ENCODE measurements at regions of chr2 and their contacts with region 1.

Region 1: GRCh38 chr2:112941753-112942658 is 31.0 kb downstream of the IL37 start:
- DNase-seq: peak; percentile 88
- H3K4me3 Mint-ChIP-seq: no peak overlapping the region
- H3K27ac Mint-ChIP-seq: no peak overlapping the region
- H3K4me1 Mint-ChIP-seq: no peaks in the 10 kb centered on the region
- H3K27me3 Mint-ChIP-seq: no peaks in the 10 kb centered on the region

Region 2: GRCh38 chr2:112606488-112606902 is 335.5 kb before region 1 on chr2:
- CTCF ChIA-PET with region 1: interaction called, 3 read pairs
- intact Hi-C with region 1: loop called (anchors 10 kb)
- DNase-seq: no peak
- H3K4me3 Mint-ChIP-seq: no peak overlapping the region
- H3K27ac Mint-ChIP-seq: no peak overlapping the region
- H3K4me1 Mint-ChIP-seq: no peaks in the 10 kb centered on the region
- H3K27me3 Mint-ChIP-seq: no peaks in the 10 kb centered on the region

Region 3: DNA sequence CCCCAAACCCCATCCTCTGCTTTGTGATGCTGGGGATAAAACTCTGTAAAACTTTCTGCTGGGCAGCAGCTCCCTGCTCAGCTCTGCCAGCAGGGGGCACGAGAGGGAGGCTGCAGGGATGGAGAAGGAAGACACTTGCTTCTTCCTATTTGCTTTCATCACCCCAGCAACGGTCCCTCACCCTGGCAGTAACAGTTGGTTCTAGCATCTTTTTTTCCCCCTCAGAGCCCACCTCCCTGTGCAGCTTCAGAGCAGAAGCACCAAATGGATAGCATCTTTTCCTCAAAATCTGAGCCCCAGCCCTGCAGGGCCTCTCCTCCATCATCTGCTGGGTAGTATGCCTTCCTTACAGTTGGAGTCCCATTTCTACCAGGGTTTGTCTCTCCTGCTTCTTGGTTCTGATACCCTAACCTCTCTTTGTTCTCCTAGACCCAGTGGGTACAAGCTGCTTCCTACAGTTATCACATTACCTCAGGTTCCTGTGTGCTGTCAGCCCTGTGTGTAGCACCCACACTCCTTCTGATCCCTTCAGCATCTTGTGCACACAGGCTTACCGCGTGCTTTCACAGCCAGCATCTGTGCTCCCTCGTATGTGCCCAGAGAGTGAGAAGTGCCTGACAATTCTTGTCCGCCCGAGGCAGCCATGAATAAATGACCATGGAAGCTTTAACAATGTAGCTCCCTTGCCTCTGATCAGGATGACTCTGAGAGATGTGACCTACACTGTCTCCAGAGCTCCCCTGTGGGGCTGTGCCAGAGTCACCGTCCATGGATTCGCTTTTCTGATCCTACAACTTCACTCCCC is 192.0 kb before region 1 on chr2:
- CTCF ChIA-PET with region 1: interaction called, 72 read pairs
- intact Hi-C with region 1: loop called (anchors 1 kb)
- DNase-seq: peak; percentile 90
- H3K4me3 Mint-ChIP-seq: no peak overlapping the region
- H3K27ac Mint-ChIP-seq: no peak overlapping the region
- H3K4me1 Mint-ChIP-seq: peaks cover 10% of the 10 kb centered on the region
- H3K27me3 Mint-ChIP-seq: no peaks in the 10 kb centered on the region

Region 4: DNA sequence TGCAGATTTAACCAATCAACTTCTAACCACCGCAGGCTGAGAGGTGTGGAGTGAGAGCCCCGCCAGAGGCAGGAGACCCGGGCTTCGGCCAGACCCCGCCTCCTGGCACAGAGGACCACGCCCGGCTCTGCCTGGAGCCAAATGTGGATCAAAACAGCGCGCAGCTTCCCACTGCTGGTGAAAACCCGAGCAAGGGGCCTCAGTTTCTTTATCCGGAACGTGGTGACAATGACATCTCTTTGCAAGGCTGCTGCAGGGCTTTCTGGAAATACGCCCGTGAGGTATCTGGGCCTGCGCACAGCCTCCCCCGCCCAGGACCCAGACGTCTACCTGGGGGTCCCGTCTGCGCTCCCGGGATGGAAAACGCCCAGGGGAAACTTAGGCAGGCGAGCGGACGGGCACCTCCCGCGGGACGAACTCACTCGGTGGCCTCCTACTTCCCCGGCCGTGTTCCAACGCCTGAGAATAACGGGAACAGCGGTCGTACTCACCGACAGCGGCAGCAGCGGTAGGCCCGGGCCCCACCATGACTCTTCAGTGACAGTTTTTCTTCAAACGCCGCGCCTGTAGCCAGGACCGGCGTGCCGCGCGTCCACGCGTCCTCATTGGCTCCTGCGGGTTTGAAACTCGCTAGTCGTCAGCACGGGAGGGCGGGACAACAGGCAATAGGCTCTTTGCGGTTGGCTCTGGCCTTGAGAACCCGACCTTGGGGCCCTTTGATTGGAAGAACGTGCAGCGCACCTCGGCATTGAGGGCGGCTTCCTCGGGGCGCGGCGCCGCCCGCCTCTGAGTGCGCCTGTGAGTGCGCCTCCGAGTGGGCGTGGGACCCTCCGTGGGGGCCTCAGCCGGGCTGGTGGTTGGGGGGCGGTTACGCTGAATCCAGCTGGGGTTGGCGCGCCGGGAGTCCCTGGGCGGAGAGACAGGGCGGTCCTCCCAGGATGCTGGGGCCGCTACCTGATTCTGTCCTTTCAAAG is 177.6 kb before region 1 on chr2 and contains the start of gene CKAP2L:
- CTCF ChIA-PET with region 1: interaction called, 12 read pairs
- intact Hi-C with region 1: no loop called
- DNase-seq: peak; percentile 99
- H3K4me3 Mint-ChIP-seq: peak within 1 kb of the TSS; percentile 98
- H3K27ac Mint-ChIP-seq: peak within 1 kb of the TSS; percentile 93
- H3K4me1 Mint-ChIP-seq: peaks cover 18% of the 10 kb centered on the region
- H3K27me3 Mint-ChIP-seq: no peaks in the 10 kb centered on the region
- total RNA-seq, gene CKAP2L: 49.2 to 50.8 TPM

Region 5: DNA sequence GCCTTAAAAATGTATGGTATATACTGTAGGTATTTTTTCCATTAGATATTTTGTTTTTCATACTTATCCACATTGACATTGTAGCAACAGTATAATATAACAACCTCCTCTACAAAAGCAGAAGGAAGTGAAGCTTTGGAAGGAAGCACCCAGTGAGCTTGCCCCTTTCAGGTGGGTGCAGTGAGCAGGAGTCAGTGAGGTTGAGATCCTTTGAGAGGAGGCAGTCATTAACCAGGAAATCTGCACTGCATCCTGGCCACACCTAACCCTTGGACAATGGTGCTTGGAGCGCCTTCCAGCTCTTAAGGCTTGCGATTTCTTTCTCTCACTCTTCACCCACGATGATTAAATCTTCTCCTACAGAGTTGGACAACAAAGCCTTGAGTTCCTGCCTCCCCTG is 17.2 kb before region 1 on chr2:
- CTCF ChIA-PET with region 1: interaction called, 21 read pairs
- intact Hi-C with region 1: no loop called
- DNase-seq: no peak
- H3K4me3 Mint-ChIP-seq: no peak overlapping the region
- H3K27ac Mint-ChIP-seq: no peak overlapping the region
- H3K4me1 Mint-ChIP-seq: no peaks in the 10 kb centered on the region
- H3K27me3 Mint-ChIP-seq: no peaks in the 10 kb centered on the region

Region 6: GRCh38 chr2:112958428-112959108 is 16.6 kb after region 1 on chr2:
- CTCF ChIA-PET with region 1: interaction called, 23 read pairs
- intact Hi-C with region 1: no loop called
- DNase-seq: peak; percentile 54
- H3K4me3 Mint-ChIP-seq: no peak overlapping the region
- H3K27ac Mint-ChIP-seq: no peak overlapping the region
- H3K4me1 Mint-ChIP-seq: no peaks in the 10 kb centered on the region
- H3K27me3 Mint-ChIP-seq: no peaks in the 10 kb centered on the region

Region 7: GRCh38 chr2:113098041-113098440 is 156.0 kb after region 1 on chr2:
- CTCF ChIA-PET with region 1: no interaction called
- intact Hi-C with region 1: no loop called
- DNase-seq: peak; percentile 59
- H3K4me3 Mint-ChIP-seq: peak overlapping the region; percentile 50
- H3K27ac Mint-ChIP-seq: peak overlapping the region; percentile 79
- H3K4me1 Mint-ChIP-seq: peaks cover 19% of the 10 kb centered on the region
- H3K27me3 Mint-ChIP-seq: no peaks in the 10 kb centered on the region

Region 8: DNA sequence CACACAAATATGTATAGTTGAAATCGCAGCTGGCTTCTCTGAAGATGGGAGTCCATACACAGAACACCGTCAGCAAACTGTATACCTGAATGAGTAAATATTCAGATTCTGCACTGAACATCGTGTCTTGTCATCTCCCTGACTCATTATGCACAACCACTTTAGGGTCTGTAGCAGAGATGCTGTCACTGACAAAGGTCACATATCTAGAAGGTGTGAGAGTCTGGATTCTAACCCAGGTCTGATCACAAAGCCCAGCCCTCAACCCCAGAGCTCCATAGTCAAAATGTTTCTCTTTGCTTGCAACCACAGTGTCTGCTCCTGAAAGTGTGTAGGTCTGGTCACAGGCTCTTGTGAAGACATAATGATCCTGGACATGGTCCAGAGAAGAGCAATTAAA is 415.1 kb after region 1 on chr2:
- CTCF ChIA-PET with region 1: no interaction called
- intact Hi-C with region 1: no loop called
- DNase-seq: no peak
- H3K4me3 Mint-ChIP-seq: no peak overlapping the region
- H3K27ac Mint-ChIP-seq: no peak overlapping the region
- H3K4me1 Mint-ChIP-seq: peaks cover 8% of the 10 kb centered on the region
- H3K27me3 Mint-ChIP-seq: no peaks in the 10 kb centered on the region

Measured in activated naive CD4-positive, alpha-beta T cell treated with anti-CD3 and anti-CD28 coated beads for 36 hours (primary cell).